Mammary epithelial cell (primary cell): ENCODE measurements at regions of chr1 and their contacts with region 1.

Region 1: DNA sequence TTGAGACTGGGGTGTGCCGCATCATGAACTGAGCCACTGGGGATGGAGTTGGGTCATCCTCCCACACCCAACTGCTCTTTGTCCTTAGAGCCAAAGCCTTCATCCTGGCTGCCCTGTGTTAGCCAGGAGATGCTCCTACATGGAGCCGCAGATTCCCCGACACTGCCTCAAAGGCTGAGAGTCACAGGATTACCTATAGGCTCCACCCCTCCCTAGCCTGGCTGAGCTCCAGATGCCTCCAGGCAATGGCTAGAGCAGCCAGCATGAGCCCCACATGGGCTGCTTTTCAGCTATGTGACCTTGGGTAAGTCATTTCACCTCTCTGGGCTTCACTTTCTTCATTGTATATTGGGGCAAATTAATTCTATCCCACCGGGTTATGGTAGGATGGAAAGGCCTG is 119.9 kb upstream of the POU3F1 start:
- DNase-seq: peak; percentile 12
- H3K4me3 ChIP-seq: no peak overlapping the region
- H3K27ac ChIP-seq: no peak overlapping the region
- H3K4me1 ChIP-seq: no peaks in the 10 kb centered on the region
- H3K27me3 ChIP-seq: peaks cover 4% of the 10 kb centered on the region
- CTCF ChIP-seq: no peak

Region 2: DNA sequence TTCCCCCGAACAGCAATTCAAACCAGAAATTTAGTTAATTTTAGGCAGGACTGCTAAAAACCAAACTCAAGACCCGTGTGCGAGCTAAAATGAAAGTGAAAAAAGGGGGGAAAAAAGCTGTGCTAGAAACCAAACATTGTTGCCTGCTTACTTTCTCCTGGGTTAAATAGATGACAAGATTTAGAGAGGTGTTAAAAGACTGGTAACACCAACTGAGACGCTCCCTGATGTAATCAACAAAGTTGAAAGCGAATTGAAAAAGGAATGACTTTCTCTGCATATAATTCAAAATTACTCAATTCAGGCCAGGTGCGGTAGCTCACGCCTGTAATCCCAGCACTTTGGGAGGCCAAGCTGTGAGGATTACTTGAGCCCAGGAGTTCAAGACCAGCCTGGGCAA is 467.3 kb before region 1 on chr1:
- CTCF ChIA-PET with region 1: no interaction called
- dilution Hi-C with region 1: no loop called
- in situ Hi-C with region 1: no loop called
- intact Hi-C with region 1: loop called (anchors 5 kb)
- DNase-seq: no peak
- H3K4me3 ChIP-seq: no peak overlapping the region
- H3K27ac ChIP-seq: no peak overlapping the region
- H3K4me1 ChIP-seq: no peaks in the 10 kb centered on the region
- H3K27me3 ChIP-seq: no peaks in the 10 kb centered on the region
- CTCF ChIP-seq: no peak

Region 3: DNA sequence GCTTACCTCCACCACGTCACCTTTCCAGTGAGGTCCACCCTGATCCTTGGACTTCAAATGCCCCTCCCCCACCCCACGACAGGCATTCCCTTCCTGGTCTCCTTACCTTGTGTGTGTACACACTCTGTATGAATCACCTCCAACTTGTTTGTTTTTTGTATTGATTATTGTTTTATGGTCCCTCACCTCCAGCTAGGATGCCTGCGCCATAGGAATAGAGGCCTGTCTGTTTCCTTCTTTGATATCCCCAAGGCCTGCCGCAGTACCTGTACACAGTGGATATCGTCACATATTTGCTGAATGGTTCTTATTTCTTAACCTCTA is 99.7 kb after region 1 on chr1:
- CTCF ChIA-PET with region 1: no interaction called
- dilution Hi-C with region 1: no loop called
- in situ Hi-C with region 1: no loop called
- intact Hi-C with region 1: no loop called
- DNase-seq: no peak
- H3K4me3 ChIP-seq: no peak overlapping the region
- H3K27ac ChIP-seq: no peak overlapping the region
- H3K4me1 ChIP-seq: no peaks in the 10 kb centered on the region
- H3K27me3 ChIP-seq: peaks cover 2% of the 10 kb centered on the region
- CTCF ChIP-seq: no peak